ENCODE measurements at regions of chr2 and their contacts with region 1.

Region 1: DNA sequence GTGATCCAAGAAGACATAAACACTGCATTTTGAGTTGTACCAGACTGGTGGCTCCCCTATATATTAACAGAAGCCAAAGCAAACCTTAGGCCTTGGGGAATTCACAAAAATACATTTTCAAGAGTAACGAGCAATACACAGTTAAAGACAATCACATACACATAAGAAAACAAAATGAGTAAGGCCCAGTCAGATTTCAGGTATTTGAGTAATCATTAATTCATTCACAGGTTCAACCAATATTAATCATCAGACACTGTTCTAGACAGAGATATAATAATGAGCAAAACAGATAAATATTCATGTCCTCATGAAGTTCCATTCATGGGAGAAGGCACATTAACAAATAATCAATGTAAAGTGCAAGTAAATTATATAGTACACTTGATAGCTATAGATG is 9.6 kb downstream of the STPG4 start:
- DNase-seq: no peak
- ATAC-seq: no peak
- H3K4me3 ChIP-seq: no peak overlapping the region
- H3K4me3 Mint-ChIP-seq: no peak overlapping the region
- H3K27ac ChIP-seq: no peak overlapping the region
- H3K27ac Mint-ChIP-seq: no peak overlapping the region
- H3K4me1 ChIP-seq: no peaks in the 10 kb centered on the region
- H3K4me1 Mint-ChIP-seq: no peaks in the 10 kb centered on the region
- H3K27me3 ChIP-seq: no peaks in the 10 kb centered on the region
- H3K27me3 Mint-ChIP-seq: no peaks in the 10 kb centered on the region
- CTCF ChIP-seq: no peak

Region 2: GRCh38 chr2:46621499-46621898 is 524.0 kb before region 1 on chr2:
- CTCF ChIA-PET with region 1: no interaction called
- POLR2A ChIA-PET with region 1: interaction called, 14 read pairs
- intact Hi-C with region 1: no loop called
- DNase-seq: no peak
- ATAC-seq: no peak
- H3K4me3 ChIP-seq: no peak overlapping the region
- H3K4me3 Mint-ChIP-seq: no peak overlapping the region
- H3K27ac ChIP-seq: no peak overlapping the region
- H3K27ac Mint-ChIP-seq: no peak overlapping the region
- H3K4me1 ChIP-seq: peaks cover 6 to 12% of the 10 kb centered on the region in 2 donors
- H3K4me1 Mint-ChIP-seq: peaks cover 19% of the 10 kb centered on the region
- H3K27me3 ChIP-seq: no peaks in the 10 kb centered on the region
- H3K27me3 Mint-ChIP-seq: no peaks in the 10 kb centered on the region
- CTCF ChIP-seq: no peak